Psoas muscle (tissue), 8 donors: ENCODE measurements at regions of chrX and their contacts with region 1.

Region 1: GRCh38 chrX:22135994-22136684 is 104.0 kb downstream of the PHEX start:
- DNase-seq: no peak
- ATAC-seq: peak in 1 of 4 donors; percentile 53
- H3K4me3 ChIP-seq: no peak overlapping the region
- H3K27ac ChIP-seq: no peak overlapping the region
- H3K4me1 ChIP-seq: no peaks in the 10 kb centered on the region
- H3K27me3 ChIP-seq: peaks cover 0 to 6% (median 0%) of the 10 kb centered on the region in 3 donors
- CTCF ChIP-seq: peak; percentile 80

Region 2: DNA sequence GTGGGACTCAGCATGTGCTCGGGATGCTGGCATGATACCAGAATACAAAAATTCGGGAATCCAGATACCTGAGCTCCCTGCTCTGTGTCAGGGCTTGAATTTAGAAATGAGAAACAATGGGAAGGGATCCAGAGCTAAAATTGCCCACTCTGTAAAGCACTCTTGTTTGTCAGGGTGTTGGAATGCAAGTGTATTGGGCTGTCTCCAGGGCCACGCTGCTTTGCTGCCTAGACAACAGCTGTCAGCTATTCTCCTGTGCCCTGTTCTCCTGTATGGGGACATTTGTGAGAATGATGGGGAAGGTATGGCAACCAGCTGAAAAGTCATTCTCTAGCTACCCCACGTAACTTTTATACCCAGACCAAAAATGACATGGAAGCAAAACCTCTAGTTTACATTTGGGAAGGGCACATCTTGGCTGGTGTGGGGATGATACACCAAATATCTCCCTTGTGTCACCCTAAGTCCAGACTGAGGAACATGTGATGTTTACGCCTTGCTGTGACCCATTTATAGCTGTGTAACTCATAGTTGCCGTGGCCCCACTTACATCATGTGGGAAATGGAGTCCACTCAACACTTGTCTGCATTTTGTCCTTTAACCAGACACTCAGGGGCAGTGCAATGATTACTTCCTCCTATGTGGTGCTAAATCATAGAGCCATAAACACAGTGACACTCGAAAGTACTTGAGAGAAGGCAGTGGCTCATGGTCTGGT is 424.9 kb before region 1 on chrX:
- intact Hi-C with region 1: no loop called
- DNase-seq: peak; percentile 26 to 67
- ATAC-seq: peak; percentile 86 to 91 (median 90)
- H3K4me3 ChIP-seq: no peak overlapping the region
- H3K27ac ChIP-seq: peak overlapping the region; percentile 76
- H3K4me1 ChIP-seq: peaks cover 3% of the 10 kb centered on the region
- H3K27me3 ChIP-seq: no peaks in the 10 kb centered on the region
- CTCF ChIP-seq: no peak

Region 3: GRCh38 chrX:22748093-22748999 is 612.2 kb after region 1 on chrX:
- intact Hi-C with region 1: loop called (anchors 1 to 5 kb)
- DNase-seq: no peak
- ATAC-seq: peak in 2 of 4 donors; percentile 51 to 53
- H3K4me3 ChIP-seq: no peak overlapping the region
- H3K27ac ChIP-seq: no peak overlapping the region
- H3K4me1 ChIP-seq: no peaks in the 10 kb centered on the region
- H3K27me3 ChIP-seq: no peaks in the 10 kb centered on the region
- CTCF ChIP-seq: peak; percentile 69